ENCODE measurements at regions of chr14 and their contacts with region 1.

Region 1: GRCh38 chr14:90985601-90986242 is 74.7 kb downstream of the RPS6KA5 start:
- DNase-seq: no peak
- ATAC-seq: peak; percentile 57
- H3K4me3 Mint-ChIP-seq: no peak overlapping the region
- H3K27ac Mint-ChIP-seq: no peak overlapping the region
- H3K4me1 Mint-ChIP-seq: peaks cover 19% of the 10 kb centered on the region
- H3K27me3 Mint-ChIP-seq: no peaks in the 10 kb centered on the region
- CTCF ChIP-seq: no peak

Region 2: GRCh38 chr14:91021991-91022621 is 36.4 kb after region 1 on chr14:
- CTCF ChIA-PET with region 1: no interaction called
- POLR2A ChIA-PET with region 1: no interaction called
- intact Hi-C with region 1: loop called (anchors 2 kb)
- DNase-seq: no peak
- ATAC-seq: peak; percentile 65
- H3K4me3 Mint-ChIP-seq: peak overlapping the region; percentile 79
- H3K27ac Mint-ChIP-seq: peak overlapping the region; percentile 92
- H3K4me1 Mint-ChIP-seq: peaks cover 61% of the 10 kb centered on the region
- H3K27me3 Mint-ChIP-seq: no peaks in the 10 kb centered on the region
- CTCF ChIP-seq: no peak

Region 3: GRCh38 chr14:91035855-91036254 is 50.1 kb after region 1 on chr14:
- CTCF ChIA-PET with region 1: no interaction called
- POLR2A ChIA-PET with region 1: no interaction called
- intact Hi-C with region 1: no loop called
- DNase-seq: no peak
- ATAC-seq: no peak
- H3K4me3 Mint-ChIP-seq: no peak overlapping the region
- H3K27ac Mint-ChIP-seq: peak overlapping the region; percentile 57
- H3K4me1 Mint-ChIP-seq: peaks cover 47% of the 10 kb centered on the region
- H3K27me3 Mint-ChIP-seq: no peaks in the 10 kb centered on the region
- CTCF ChIP-seq: no peak

Region 4: DNA sequence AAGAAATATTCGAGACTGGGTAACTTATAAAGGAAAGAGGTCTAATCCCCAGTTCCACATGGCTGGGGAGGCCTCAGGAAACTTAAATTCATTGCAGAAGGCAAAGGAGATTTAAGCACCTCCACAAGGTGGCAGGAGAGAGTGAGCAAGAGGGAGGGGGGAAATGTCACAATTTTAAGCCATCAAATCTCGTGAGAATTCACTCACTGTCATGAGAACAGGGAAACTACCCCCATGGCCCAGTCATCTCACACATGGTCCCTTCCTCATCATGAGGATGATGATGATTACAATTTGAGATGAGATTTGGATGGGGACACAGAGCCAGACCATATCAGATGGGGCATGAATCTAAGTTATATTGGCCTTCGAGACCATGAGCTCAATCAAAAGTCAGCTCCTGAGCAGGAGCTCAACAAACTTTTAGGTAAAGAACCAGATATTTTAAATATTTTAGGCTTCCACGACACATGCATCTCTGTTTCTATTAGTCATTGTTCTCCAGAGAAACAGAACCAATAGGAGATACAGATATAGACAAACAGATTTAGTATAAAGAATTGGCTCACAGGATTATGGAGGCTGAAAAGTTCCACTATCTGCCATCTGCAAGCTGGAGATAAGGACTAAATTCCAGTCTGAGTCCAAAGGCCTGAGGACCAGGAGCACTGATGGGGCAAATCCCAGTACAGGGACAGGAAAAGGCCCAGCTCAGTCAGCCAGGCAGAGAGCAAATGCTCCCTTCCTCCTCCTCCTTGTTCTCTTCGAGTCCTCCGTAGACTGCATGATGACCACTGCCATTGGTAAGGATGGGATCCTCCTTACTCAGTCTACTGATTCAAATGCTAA is 153.0 kb after region 1 on chr14:
- CTCF ChIA-PET with region 1: no interaction called
- POLR2A ChIA-PET with region 1: no interaction called
- intact Hi-C with region 1: loop called (anchors 5 kb)
- DNase-seq: no peak
- ATAC-seq: peak; percentile 29
- H3K4me3 Mint-ChIP-seq: no peak overlapping the region
- H3K27ac Mint-ChIP-seq: peak overlapping the region; percentile 69
- H3K4me1 Mint-ChIP-seq: peaks cover 32% of the 10 kb centered on the region
- H3K27me3 Mint-ChIP-seq: no peaks in the 10 kb centered on the region
- CTCF ChIP-seq: no peak

Region 5: GRCh38 chr14:91286530-91286937 is 300.8 kb after region 1 on chr14:
- CTCF ChIA-PET with region 1: interaction called, 3 read pairs
- POLR2A ChIA-PET with region 1: no interaction called
- intact Hi-C with region 1: loop called (anchors 5 kb)
- DNase-seq: peak; percentile 64
- ATAC-seq: peak; percentile 88
- H3K4me3 Mint-ChIP-seq: no peak overlapping the region
- H3K27ac Mint-ChIP-seq: no peak overlapping the region
- H3K4me1 Mint-ChIP-seq: peaks cover 24% of the 10 kb centered on the region
- H3K27me3 Mint-ChIP-seq: no peaks in the 10 kb centered on the region
- CTCF ChIP-seq: peak; percentile 90